ENCODE measurements at regions of chr16 and their contacts with region 1.

Region 1: GRCh38 chr16:73289232-73289631 is 241.3 kb upstream of the ZFHX3 start:
- DNase-seq: peak; percentile 86
- ATAC-seq: peak; percentile 91
- H3K4me3 ChIP-seq: no peak overlapping the region; the same call in 1 of the 2 replicates
- H3K27ac ChIP-seq: peak overlapping the region; percentile 76
- H3K4me1 ChIP-seq: peaks cover 18% of the 10 kb centered on the region
- H3K27me3 ChIP-seq: no peaks in the 10 kb centered on the region
- CTCF ChIP-seq: no peak
- EP300 ChIP-seq: peak; percentile 99
- POLR2A ChIP-seq: peak; percentile 53; the same call in 1 of the 2 replicates
- RAD21 ChIP-seq: peak; percentile 40; the same call in 1 of the 2 replicates

Region 2: GRCh38 chr16:73315645-73316044 is 26.4 kb after region 1 on chr16:
- CTCF ChIA-PET with region 1: no interaction called
- POLR2A ChIA-PET with region 1: interaction called, 3 read pairs
- RAD21 ChIA-PET with region 1: interaction called, 3 read pairs
- SMC1A ChIA-PET with region 1: interaction called, 4 read pairs
- in situ Hi-C with region 1: no loop called
- intact Hi-C with region 1: loop called (anchors 1 kb)
- DNase-seq: peak; percentile 60
- ATAC-seq: peak; percentile 90
- H3K4me3 ChIP-seq: no peak overlapping the region
- H3K27ac ChIP-seq: peak overlapping the region; percentile 64
- H3K4me1 ChIP-seq: peaks cover 7% of the 10 kb centered on the region
- H3K27me3 ChIP-seq: no peaks in the 10 kb centered on the region
- CTCF ChIP-seq: no peak
- EP300 ChIP-seq: peak; percentile 33 to 59; a peak in 2 of 4 replicates
- POLR2A ChIP-seq: no peak
- RAD21 ChIP-seq: no peak